Mammary epithelial cell (primary cell): ENCODE measurements at regions of chr9 and their contacts with region 1.

Region 1: DNA sequence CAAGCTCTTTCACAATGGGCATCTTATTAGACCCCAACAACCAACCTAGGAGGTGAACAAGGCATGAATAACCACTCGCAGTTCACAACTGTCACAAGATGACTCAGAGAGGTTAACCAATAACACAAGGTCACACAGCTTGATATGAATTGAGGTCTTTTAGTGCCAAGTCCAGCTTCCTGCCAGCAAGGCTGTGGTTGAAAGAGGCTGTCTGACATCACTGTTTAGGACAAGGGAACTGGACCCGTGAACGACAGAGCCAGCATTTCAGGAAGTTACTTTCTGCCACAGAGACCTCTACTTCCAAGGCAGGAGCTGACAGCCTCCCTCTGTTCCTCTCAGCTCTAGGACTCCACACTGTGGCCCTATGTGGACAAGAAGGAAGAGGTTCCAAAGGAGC is 53.4 kb upstream of the ALDH1B1 start:
- DNase-seq: peak; percentile 60
- H3K4me3 ChIP-seq: no peak overlapping the region
- H3K27ac ChIP-seq: no peak overlapping the region
- H3K4me1 ChIP-seq: peaks cover 4% of the 10 kb centered on the region
- H3K27me3 ChIP-seq: no peaks in the 10 kb centered on the region
- CTCF ChIP-seq: no peak

Region 2: DNA sequence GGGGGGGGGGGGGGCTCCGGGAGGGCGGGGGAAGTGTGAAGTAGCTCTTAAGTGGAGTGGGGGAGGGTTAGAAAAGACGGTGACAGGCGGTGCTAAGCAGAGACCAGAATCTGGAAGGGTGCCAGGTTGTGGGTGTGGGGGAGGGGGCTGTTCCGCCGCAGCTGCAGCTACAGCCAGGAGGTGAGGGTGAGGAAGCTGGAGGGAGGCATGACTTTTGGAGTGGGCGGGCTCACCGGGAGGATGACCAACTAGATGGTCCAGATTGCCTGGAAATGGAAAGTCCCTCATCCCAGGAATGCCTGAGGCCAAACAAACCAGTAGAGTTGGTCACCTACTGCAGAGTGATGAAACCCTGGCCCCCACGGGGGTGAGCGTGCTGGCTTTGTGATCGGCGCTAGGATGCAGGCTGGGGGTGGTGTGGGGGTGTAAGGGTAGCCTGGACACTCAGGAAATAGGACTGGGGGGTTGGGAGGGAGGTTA is 112.0 kb before region 1 on chr9:
- CTCF ChIA-PET with region 1: no interaction called
- dilution Hi-C with region 1: loop called (anchors 25 kb)
- in situ Hi-C with region 1: no loop called
- intact Hi-C with region 1: no loop called
- DNase-seq: peak; percentile 95
- H3K4me3 ChIP-seq: no peak overlapping the region
- H3K27ac ChIP-seq: no peak overlapping the region
- H3K4me1 ChIP-seq: peaks cover 7% of the 10 kb centered on the region
- H3K27me3 ChIP-seq: no peaks in the 10 kb centered on the region
- CTCF ChIP-seq: no peak

Region 3: DNA sequence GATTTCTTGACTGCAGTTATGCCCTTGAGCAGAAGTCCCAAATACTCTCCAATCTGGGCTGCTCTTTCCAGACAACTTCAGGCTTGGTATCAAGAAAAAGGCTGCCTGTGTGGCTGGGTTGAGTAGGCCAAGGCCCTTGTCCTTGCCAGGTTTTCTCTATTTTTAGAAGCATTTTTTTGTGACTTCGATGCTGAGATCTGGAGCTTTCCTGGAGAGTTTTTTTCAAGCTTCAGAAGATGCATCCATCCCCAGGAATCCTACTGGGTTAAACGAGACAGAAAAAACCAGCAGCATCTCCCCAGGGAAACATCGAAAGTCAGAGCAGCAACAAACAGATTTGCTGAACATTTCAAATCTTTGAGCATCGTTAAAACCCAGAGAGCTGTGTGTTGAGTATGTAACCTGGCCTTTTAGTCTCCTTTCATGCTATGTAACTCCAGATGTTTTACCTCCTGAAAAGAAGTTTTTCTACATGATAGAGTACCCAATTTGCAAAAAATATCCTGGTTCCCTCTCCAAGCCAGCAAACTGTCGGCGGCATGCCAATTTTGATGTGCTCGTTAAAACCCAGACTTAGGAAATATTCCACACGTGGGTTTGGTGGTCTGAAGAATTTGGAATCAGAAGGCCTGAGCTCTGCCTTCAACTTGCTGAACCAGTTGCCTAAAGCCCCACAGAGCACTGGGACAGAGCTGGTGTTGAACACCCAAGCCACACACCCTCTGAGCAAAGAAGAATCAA is 44.7 kb before region 1 on chr9:
- CTCF ChIA-PET with region 1: no interaction called
- dilution Hi-C with region 1: no loop called
- in situ Hi-C with region 1: no loop called
- intact Hi-C with region 1: no loop called
- DNase-seq: no peak
- H3K4me3 ChIP-seq: no peak overlapping the region
- H3K27ac ChIP-seq: no peak overlapping the region
- H3K4me1 ChIP-seq: no peaks in the 10 kb centered on the region
- H3K27me3 ChIP-seq: no peaks in the 10 kb centered on the region
- CTCF ChIP-seq: no peak

Region 4: GRCh38 chr9:38405785-38406184 is 66.7 kb after region 1 on chr9:
- CTCF ChIA-PET with region 1: no interaction called
- dilution Hi-C with region 1: no loop called
- in situ Hi-C with region 1: no loop called
- intact Hi-C with region 1: loop called (anchors 2 kb)
- DNase-seq: no peak
- H3K4me3 ChIP-seq: no peak overlapping the region
- H3K27ac ChIP-seq: no peak overlapping the region
- H3K4me1 ChIP-seq: no peaks in the 10 kb centered on the region
- H3K27me3 ChIP-seq: peaks cover 4% of the 10 kb centered on the region
- CTCF ChIP-seq: no peak